ENCODE measurements at regions of chr10 and their contacts with region 1.

Region 1: GRCh38 chr10:26697163-26697921 is at the start of gene PDSS1:
- DNase-seq: peak; percentile 29 to 77 (median 52)
- ATAC-seq: peak; percentile 65
- H3K4me3 ChIP-seq: peak within 1 kb of the TSS; percentile 69
- H3K4me3 Mint-ChIP-seq: peak within 1 kb of the TSS; percentile 96
- H3K27ac ChIP-seq: peak within 1 kb of the TSS; percentile 53 to 75
- H3K27ac Mint-ChIP-seq: peak within 1 kb of the TSS; percentile 92
- H3K4me1 ChIP-seq: peaks cover 18% of the 10 kb centered on the region
- H3K4me1 Mint-ChIP-seq: peaks cover 38% of the 10 kb centered on the region
- H3K27me3 ChIP-seq: no peaks in the 10 kb centered on the region
- H3K27me3 Mint-ChIP-seq: no peaks in the 10 kb centered on the region
- CTCF ChIP-seq: no peak
- total RNA-seq, gene PDSS1: 3.8 to 4.5 TPM

Region 2: GRCh38 chr10:26612151-26612915 is 85.0 kb before region 1 on chr10:
- CTCF ChIA-PET with region 1: no interaction called
- POLR2A ChIA-PET with region 1: no interaction called
- intact Hi-C with region 1: loop called in 1 of 2 experiments (anchors 5 kb)
- DNase-seq: no peak
- ATAC-seq: no peak
- H3K4me3 ChIP-seq: no peak overlapping the region
- H3K4me3 Mint-ChIP-seq: no peak overlapping the region
- H3K27ac ChIP-seq: no peak overlapping the region
- H3K27ac Mint-ChIP-seq: no peak overlapping the region
- H3K4me1 ChIP-seq: no peaks in the 10 kb centered on the region
- H3K4me1 Mint-ChIP-seq: no peaks in the 10 kb centered on the region
- H3K27me3 ChIP-seq: no peaks in the 10 kb centered on the region
- H3K27me3 Mint-ChIP-seq: no peaks in the 10 kb centered on the region
- CTCF ChIP-seq: no peak

Region 3: DNA sequence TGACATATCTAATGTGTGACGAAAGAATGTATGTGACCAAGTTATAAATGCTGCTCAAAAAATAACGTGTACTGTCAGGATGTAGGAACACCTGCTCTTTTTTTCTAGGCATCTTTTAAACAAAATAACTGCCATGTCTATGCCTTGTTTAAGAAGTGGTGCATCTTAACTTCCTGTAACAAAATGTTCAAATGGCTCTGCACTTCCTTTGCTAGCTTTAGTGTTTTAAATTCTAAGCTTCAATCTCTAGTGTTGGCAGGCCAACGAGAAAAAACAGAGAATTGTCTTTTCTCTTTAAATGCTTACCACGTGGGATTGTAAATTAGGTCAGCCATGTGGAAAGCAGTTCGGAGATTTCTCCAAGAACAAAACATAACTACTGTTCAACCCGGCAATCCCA is 14.4 kb before region 1 on chr10:
- CTCF ChIA-PET with region 1: interaction called, 5 read pairs
- POLR2A ChIA-PET with region 1: interaction called, 17 read pairs
- intact Hi-C with region 1: loop called in 1 of 2 experiments (anchors 1 kb)
- DNase-seq: peak in 3 of 14 experiments; percentile 62 to 68 (median 63)
- ATAC-seq: peak; percentile 91
- H3K4me3 ChIP-seq: no peak overlapping the region
- H3K4me3 Mint-ChIP-seq: peak overlapping the region; percentile 11
- H3K27ac ChIP-seq: peak overlapping the region; percentile 28 to 50
- H3K27ac Mint-ChIP-seq: peak overlapping the region; percentile 83
- H3K4me1 ChIP-seq: no peaks in the 10 kb centered on the region
- H3K4me1 Mint-ChIP-seq: peaks cover 50% of the 10 kb centered on the region
- H3K27me3 ChIP-seq: no peaks in the 10 kb centered on the region
- H3K27me3 Mint-ChIP-seq: peaks cover 4% of the 10 kb centered on the region
- CTCF ChIP-seq: no peak

Measured in CD4-positive, alpha-beta T cell (primary cell).